T-cell (primary cell): ENCODE measurements at regions of chr5 and their contacts with region 1.

Region 1: GRCh38 chr5:142800776-142801494 is 30.8 kb downstream of the ARHGAP26 start:
- DNase-seq: peak; percentile 7 to 74 (median 37)
- ATAC-seq: peak; percentile 77 to 88 (median 82)
- H3K4me3 ChIP-seq: peak overlapping the region; percentile 1 to 27
- H3K4me3 Mint-ChIP-seq: peak overlapping the region; percentile 66 to 84 (median 68)
- H3K27ac ChIP-seq: peak overlapping the region; percentile 71
- H3K27ac Mint-ChIP-seq: peak overlapping the region; percentile 89 to 97
- H3K4me1 ChIP-seq: peaks cover 50% of the 10 kb centered on the region in 2 experiments
- H3K4me1 Mint-ChIP-seq: peaks cover 61 to 67% (median 66%) of the 10 kb centered on the region in 3 donors
- H3K27me3 ChIP-seq: no peaks in the 10 kb centered on the region
- H3K27me3 Mint-ChIP-seq: no peaks in the 10 kb centered on the region

Region 2: GRCh38 chr5:142324871-142325724 is 475.8 kb before region 1 on chr5 and contains the start of gene SPRY4:
- CTCF ChIA-PET with region 1: no interaction called
- POLR2A ChIA-PET with region 1: no interaction called
- DNase-seq: peak; percentile 53 to 84 (median 72)
- ATAC-seq: peak; percentile 76 to 83 (median 80)
- H3K4me3 ChIP-seq: peak within 1 kb of the TSS; percentile 55 to 87
- H3K4me3 Mint-ChIP-seq: peak within 1 kb of the TSS; percentile 74 to 90 (median 84)
- H3K27ac ChIP-seq: no peak within 1 kb of the TSS
- H3K27ac Mint-ChIP-seq: no peak within 1 kb of the TSS
- H3K4me1 ChIP-seq: peaks cover 14 to 33% of the 10 kb centered on the region in 2 experiments
- H3K4me1 Mint-ChIP-seq: peaks cover 32 to 39% (median 34%) of the 10 kb centered on the region in 3 donors
- H3K27me3 ChIP-seq: peaks cover 5 to 68% of the 10 kb centered on the region in 2 experiments
- H3K27me3 Mint-ChIP-seq: peaks cover 57 to 74% of the 10 kb centered on the region in 2 donors
- total RNA-seq, gene SPRY4: 0.10 to 0.57 (median 0.28) TPM in 4 of 5 donors, not detected in the other

Region 3: DNA sequence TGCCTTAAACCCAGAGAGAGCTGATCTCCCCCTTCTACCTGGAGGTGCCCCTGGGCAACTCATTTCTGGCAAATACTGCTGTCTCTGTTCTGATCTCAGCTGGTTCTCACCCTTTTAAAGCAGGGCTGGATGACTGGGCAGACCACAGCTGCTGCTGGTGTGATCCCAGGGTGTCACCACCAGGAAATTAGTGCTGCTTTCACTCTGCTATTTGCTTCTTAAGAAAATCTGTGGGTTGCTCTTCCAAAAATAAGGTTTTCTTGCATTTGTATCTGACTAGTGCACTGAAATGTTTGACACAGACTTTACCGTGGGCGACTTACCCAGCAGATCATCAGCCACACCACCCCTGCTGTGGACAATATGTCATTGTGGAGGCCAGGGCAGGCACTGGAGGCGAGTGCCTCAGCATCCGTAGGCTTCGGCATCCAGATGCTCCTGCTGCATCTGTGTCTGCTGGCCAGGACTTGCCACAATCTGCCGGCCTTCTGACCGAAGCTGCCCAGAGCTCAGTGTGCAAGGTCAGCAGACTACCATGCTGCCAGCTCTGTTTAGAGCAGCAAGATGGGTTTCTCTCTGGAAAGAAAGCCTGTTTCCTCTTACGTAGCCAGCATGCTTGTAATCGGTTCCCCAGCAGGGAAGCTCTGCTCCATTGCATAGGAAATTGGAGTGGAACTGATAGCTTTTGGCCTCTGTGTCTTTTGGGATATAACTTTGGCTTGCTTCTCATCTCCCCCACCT is 17.2 kb before region 1 on chr5:
- CTCF ChIA-PET with region 1: interaction called, 6 to 11 read pairs
- POLR2A ChIA-PET with region 1: interaction called in 1 of 2 experiments, 4 read pairs
- DNase-seq: peak in 28 of 35 experiments; percentile 8 to 63 (median 28)
- ATAC-seq: peak; percentile 37 to 68 (median 60)
- H3K4me3 ChIP-seq: peak overlapping the region in 1 of 2 donors; percentile 25
- H3K4me3 Mint-ChIP-seq: peak overlapping the region; percentile 11 to 67 (median 65)
- H3K27ac ChIP-seq: peak overlapping the region; percentile 60
- H3K27ac Mint-ChIP-seq: peak overlapping the region; percentile 60 to 68
- H3K4me1 ChIP-seq: peaks cover 7 to 75% of the 10 kb centered on the region in 2 experiments
- H3K4me1 Mint-ChIP-seq: peaks cover 70 to 78% (median 74%) of the 10 kb centered on the region in 3 donors
- H3K27me3 ChIP-seq: no peaks in the 10 kb centered on the region
- H3K27me3 Mint-ChIP-seq: no peaks in the 10 kb centered on the region

Region 4: DNA sequence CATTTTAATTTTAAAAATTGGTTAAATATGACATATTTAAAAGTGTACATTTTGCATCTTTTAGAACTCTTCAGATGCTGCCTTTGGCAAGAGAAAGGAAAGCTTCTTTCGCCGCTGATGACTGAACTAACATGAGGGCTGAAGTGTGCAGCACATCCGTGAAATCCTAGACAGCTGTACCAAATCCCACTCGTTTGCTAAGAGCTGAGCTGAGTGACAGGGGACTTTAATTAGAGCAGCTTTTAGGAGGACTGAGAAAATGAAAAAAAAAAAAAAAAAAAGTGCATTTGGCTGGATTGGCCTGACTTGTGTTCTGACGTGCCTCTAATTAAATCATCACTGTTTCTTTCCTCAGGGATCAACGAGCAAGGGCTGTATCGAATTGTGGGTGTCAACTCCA is 240.5 kb after region 1 on chr5:
- CTCF ChIA-PET with region 1: no interaction called
- POLR2A ChIA-PET with region 1: interaction called in 1 of 2 experiments, 14 read pairs
- DNase-seq: no peak
- ATAC-seq: no peak
- H3K4me3 ChIP-seq: no peak overlapping the region
- H3K4me3 Mint-ChIP-seq: no peak overlapping the region
- H3K27ac ChIP-seq: no peak overlapping the region
- H3K27ac Mint-ChIP-seq: no peak overlapping the region
- H3K4me1 ChIP-seq: no peaks in the 10 kb centered on the region
- H3K4me1 Mint-ChIP-seq: peaks cover 5 to 6% (median 6%) of the 10 kb centered on the region in 3 donors
- H3K27me3 ChIP-seq: no peaks in the 10 kb centered on the region
- H3K27me3 Mint-ChIP-seq: no peaks in the 10 kb centered on the region

Region 5: GRCh38 chr5:143086908-143087637 is 286.1 kb after region 1 on chr5:
- CTCF ChIA-PET with region 1: no interaction called
- POLR2A ChIA-PET with region 1: no interaction called
- DNase-seq: no peak
- ATAC-seq: no peak
- H3K4me3 ChIP-seq: no peak overlapping the region
- H3K4me3 Mint-ChIP-seq: no peak overlapping the region
- H3K27ac ChIP-seq: no peak overlapping the region
- H3K27ac Mint-ChIP-seq: no peak overlapping the region
- H3K4me1 ChIP-seq: no peaks in the 10 kb centered on the region
- H3K4me1 Mint-ChIP-seq: no peaks in the 10 kb centered on the region
- H3K27me3 ChIP-seq: no peaks in the 10 kb centered on the region
- H3K27me3 Mint-ChIP-seq: no peaks in the 10 kb centered on the region